Activated T-helper 1 cell treated with anti-CD3 and anti-CD28 coated beads, Interleukin-12 subunit alpha, Interleukin-12 subunit beta, Interleukin-2, Interleukin-4 antibody, amounts not matched to agents 30 ng/mL and 10 ng/mL and 1 ng/mL, durations not matched to agents 14 hours and 24 hours and 36 hours (primary cell): ENCODE measurements at regions of chr20 and their contacts with region 1.

Region 1: DNA sequence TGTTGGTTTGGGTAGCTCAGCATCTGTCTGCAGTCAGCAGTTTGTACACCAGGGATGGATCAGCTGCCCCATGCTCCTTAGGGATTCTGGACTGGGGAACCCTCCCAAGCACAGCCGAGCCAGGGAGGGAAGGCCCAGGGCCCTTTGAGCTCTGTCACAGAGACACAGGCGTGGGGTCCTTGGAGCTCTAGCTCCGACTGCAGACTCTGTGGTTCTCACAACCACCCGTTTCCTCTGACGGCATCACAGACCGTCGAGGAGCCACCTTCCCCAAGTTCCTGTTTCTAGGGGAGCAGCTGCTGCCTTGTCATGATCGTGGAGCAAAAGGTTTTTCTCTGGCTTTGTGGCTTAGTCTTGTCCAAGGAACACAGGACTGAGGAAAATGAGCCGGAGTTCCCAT is at the start of gene SLA2:
- DNase-seq: peak; percentile 61
- H3K4me3 Mint-ChIP-seq: peak within 1 kb of the TSS; percentile 98
- H3K27ac Mint-ChIP-seq: peak within 1 kb of the TSS; percentile 99
- H3K4me1 Mint-ChIP-seq: peaks cover 48% of the 10 kb centered on the region
- H3K27me3 Mint-ChIP-seq: no peaks in the 10 kb centered on the region
- total RNA-seq, gene SLA2: 62.0 and 64.0 TPM in 2 replicates

Region 2: GRCh38 chr20:36573103-36573794 is 72.7 kb before region 1 on chr20 and contains the start of gene TGIF2:
- intact Hi-C with region 1: loop called (anchors 1 kb)
- DNase-seq: peak; percentile 79
- H3K4me3 Mint-ChIP-seq: peak within 1 kb of the TSS; percentile 96
- H3K27ac Mint-ChIP-seq: peak within 1 kb of the TSS; percentile 97
- H3K4me1 Mint-ChIP-seq: peaks cover 37% of the 10 kb centered on the region
- H3K27me3 Mint-ChIP-seq: peaks cover 3% of the 10 kb centered on the region
- total RNA-seq, gene TGIF2: 50.9 and 55.4 TPM in 2 replicates

Region 3: GRCh38 chr20:36605399-36606157 is 40.4 kb before region 1 on chr20 and contains the start of gene RAB5IF:
- intact Hi-C with region 1: loop called (anchors 1 kb)
- DNase-seq: peak; percentile 100
- H3K4me3 Mint-ChIP-seq: peak within 1 kb of the TSS; percentile 98
- H3K27ac Mint-ChIP-seq: peak within 1 kb of the TSS; percentile 94
- H3K4me1 Mint-ChIP-seq: peaks cover 32% of the 10 kb centered on the region
- H3K27me3 Mint-ChIP-seq: peaks cover 2% of the 10 kb centered on the region
- total RNA-seq, gene RAB5IF: 112 and 119 TPM in 2 replicates

Region 4: GRCh38 chr20:36629719-36630681 is 16.0 kb before region 1 on chr20:
- intact Hi-C with region 1: loop called (anchors 1 kb)
- DNase-seq: peak; percentile 49
- H3K4me3 Mint-ChIP-seq: peak overlapping the region; percentile 69
- H3K27ac Mint-ChIP-seq: peak overlapping the region; percentile 96
- H3K4me1 Mint-ChIP-seq: peaks cover 50% of the 10 kb centered on the region
- H3K27me3 Mint-ChIP-seq: no peaks in the 10 kb centered on the region

Region 5: DNA sequence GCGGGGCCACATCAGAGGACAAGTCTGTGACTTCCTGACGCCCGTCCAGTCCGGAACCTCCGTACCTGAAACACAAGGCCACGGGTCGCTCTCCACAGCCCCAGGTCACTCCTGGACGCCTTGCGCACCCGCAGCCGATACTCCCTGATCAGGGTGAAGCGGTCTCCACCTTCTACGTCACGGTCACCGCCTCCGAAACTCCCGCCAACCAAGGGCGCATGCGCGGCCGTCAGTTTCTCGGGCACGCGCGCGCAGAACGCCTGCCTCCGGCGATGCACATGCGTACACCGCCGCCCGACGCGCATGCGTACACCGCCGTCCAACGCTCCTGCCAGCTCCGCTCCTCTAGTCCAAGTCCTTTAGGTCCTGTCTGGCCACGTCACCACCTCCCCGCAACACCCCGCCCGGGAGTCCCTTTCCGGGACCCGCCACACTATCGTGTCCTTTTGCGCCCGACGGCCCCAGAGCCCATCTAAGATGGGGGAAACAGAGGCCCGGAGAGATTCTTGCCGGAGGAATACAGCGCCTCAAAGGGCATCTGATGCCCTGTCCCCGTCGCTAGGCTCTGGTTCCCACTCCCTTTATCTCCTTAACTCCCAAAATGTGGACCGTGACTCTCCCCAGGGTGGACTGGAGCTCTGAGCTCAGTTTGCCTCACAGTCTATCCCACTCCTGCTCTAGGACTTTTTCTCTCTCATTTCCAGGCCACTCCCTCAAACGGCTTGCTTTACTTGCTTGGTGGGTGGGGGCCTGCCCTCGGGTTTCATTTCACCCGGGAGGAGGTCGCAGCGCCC is 127.8 kb after region 1 on chr20 and contains the start of gene DSN1:
- intact Hi-C with region 1: loop called (anchors 1 kb)
- DNase-seq: peak; percentile 98
- H3K4me3 Mint-ChIP-seq: peak within 1 kb of the TSS; percentile 86
- H3K27ac Mint-ChIP-seq: peak within 1 kb of the TSS; percentile 95
- H3K4me1 Mint-ChIP-seq: peaks cover 48% of the 10 kb centered on the region
- H3K27me3 Mint-ChIP-seq: peaks cover 6% of the 10 kb centered on the region
- total RNA-seq, gene DSN1: 23.2 and 29.0 TPM in 2 replicates

Region 6: DNA sequence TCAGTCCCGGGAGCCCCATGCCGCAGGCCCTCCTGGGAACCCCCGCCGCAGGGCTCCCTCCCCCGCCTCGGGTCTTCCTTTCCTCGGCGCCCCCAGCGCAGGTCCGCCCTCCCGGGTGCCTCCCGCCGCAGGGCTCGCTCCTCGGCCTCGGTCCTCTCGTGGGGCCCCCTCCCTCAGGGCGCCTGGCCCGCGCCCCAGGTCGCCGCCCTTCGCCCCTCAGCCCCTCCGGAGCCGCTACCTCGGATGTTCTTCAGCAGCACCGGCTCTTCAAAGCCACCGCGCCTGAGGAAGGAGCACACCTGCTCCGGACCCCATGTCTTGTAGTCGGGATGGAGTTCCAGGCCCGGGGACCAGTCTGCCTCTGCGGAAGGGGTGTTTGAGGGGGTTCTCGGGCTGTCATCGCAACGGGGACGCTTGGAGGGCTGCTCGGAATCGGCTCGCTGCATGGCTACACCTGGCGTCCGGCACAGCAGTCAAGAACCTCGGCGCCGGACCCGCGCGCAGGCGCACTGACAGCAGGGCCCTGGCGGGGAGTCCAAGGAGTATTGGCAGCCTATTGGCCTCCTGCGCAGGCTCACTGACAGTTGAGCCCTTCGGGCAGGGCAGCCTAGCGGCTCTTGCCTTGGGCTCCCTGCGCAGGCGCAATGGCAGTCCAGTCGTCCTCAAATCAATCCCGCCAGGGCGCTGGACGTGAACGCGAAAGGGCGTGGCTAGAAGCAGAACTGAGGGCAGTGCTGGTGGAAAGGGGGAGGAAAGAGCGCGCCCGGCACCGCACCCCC is 305.4 kb after region 1 on chr20 and contains the start of gene SAMHD1:
- intact Hi-C with region 1: loop called (anchors 10 kb)
- DNase-seq: peak; percentile 90
- H3K4me3 Mint-ChIP-seq: peak within 1 kb of the TSS; percentile 92
- H3K27ac Mint-ChIP-seq: peak within 1 kb of the TSS; percentile 91
- H3K4me1 Mint-ChIP-seq: peaks cover 47% of the 10 kb centered on the region
- H3K27me3 Mint-ChIP-seq: no peaks in the 10 kb centered on the region
- total RNA-seq, gene SAMHD1: 55.0 and 59.9 TPM in 2 replicates

Region 7: DNA sequence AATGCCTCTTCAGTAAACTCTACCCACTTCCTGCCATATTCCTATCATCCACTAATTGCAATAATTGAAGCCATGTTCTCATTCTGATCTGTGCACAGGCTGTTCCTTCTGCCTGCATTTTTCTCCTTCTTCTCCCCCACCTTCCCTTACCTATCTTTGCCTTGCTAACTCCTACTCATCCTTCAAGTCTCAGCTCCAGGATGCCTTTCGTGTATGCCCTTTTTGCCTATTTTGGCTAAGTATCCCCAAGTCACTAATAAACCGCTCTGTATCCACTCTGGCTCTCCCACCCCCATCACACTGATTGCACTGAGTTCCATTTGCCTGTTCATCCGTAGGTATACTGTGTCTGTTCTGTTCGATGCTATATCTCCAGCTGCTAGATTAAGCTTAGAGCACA is 526.8 kb after region 1 on chr20:
- intact Hi-C with region 1: no loop called
- DNase-seq: no peak
- H3K4me3 Mint-ChIP-seq: no peak overlapping the region
- H3K27ac Mint-ChIP-seq: no peak overlapping the region
- H3K4me1 Mint-ChIP-seq: peaks cover under 1% of the 10 kb centered on the region
- H3K27me3 Mint-ChIP-seq: peaks cover 9% of the 10 kb centered on the region